ENCODE measurements at regions of chr1 and their contacts with region 1.

Region 1: DNA sequence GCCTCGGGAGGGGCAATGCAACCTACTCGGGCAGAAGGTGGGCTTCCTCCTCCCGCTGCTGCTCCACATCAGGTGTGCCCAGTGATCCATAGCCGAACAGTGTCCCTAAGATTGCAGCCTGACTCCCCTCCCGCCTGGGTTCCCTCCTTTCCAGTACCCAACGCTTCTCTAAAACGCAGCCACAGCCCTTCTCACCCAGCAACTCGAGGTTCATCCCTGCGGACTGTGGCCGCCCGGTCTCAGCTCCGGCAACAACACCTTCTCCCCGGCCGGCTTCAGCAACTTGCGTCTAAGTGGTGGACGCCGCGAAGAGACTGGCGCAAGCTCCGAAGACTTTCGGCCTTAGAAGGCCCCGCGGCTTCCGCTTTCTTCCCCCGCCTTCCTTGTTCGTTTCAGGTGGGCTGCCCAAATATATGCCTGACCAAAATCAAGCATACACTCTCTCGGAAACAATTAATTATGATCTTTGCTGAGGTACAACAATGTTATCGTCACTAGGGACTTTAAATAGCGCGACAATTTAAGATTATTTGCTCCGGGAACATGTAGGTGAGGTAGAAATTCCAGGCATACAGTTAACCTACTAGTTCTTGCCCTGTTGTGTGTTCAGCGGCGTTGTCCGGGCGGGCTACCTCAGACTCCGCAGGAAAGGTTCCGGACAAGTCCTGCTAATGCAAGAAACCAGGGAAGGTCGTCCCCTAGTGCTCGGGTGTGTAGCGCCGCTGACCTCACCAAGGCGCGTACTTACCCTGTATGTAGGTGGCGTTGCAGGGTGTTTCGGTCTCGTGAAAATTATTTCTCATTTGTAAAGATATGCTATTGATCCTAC is at the start of gene RBBP5:
- DNase-seq: peak; percentile 94
- ATAC-seq: peak; percentile 92
- H3K4me3 Mint-ChIP-seq: peak within 1 kb of the TSS; percentile 99
- H3K27ac Mint-ChIP-seq: peak within 1 kb of the TSS; percentile 100
- H3K4me1 Mint-ChIP-seq: peaks cover 57% of the 10 kb centered on the region
- H3K27me3 Mint-ChIP-seq: no peaks in the 10 kb centered on the region
- CTCF ChIP-seq: no peak
- total RNA-seq, gene RBBP5: 16.3 and 19.7 TPM in 2 replicates

Region 2: GRCh38 chr1:203795441-203796235 is 1326.2 kb before region 1 on chr1 and contains the starts of genes ZBED6 and ZC3H11A:
- CTCF ChIA-PET with region 1: no interaction called
- POLR2A ChIA-PET with region 1: interaction called, 9 read pairs
- intact Hi-C with region 1: loop called (anchors 5 kb)
- DNase-seq: peak; percentile 90
- ATAC-seq: peak; percentile 97
- H3K4me3 Mint-ChIP-seq: peak within 1 kb of the TSS; percentile 99
- H3K27ac Mint-ChIP-seq: peak within 1 kb of the TSS; percentile 95
- H3K4me1 Mint-ChIP-seq: peaks cover 51% of the 10 kb centered on the region
- H3K27me3 Mint-ChIP-seq: no peaks in the 10 kb centered on the region
- CTCF ChIP-seq: no peak
- total RNA-seq, gene ZBED6: 26.3 and 31.4 TPM in 2 replicates
- total RNA-seq, gene ZC3H11A: 85.6 and 91.6 TPM in 2 replicates

Region 3: GRCh38 chr1:204961765-204962419 is 160.0 kb before region 1 on chr1:
- CTCF ChIA-PET with region 1: no interaction called
- POLR2A ChIA-PET with region 1: no interaction called
- intact Hi-C with region 1: no loop called
- DNase-seq: no peak
- ATAC-seq: no peak
- H3K4me3 Mint-ChIP-seq: no peak overlapping the region
- H3K27ac Mint-ChIP-seq: no peak overlapping the region
- H3K4me1 Mint-ChIP-seq: peaks cover 22% of the 10 kb centered on the region
- H3K27me3 Mint-ChIP-seq: peaks cover 18% of the 10 kb centered on the region
- CTCF ChIP-seq: no peak

Region 4: DNA sequence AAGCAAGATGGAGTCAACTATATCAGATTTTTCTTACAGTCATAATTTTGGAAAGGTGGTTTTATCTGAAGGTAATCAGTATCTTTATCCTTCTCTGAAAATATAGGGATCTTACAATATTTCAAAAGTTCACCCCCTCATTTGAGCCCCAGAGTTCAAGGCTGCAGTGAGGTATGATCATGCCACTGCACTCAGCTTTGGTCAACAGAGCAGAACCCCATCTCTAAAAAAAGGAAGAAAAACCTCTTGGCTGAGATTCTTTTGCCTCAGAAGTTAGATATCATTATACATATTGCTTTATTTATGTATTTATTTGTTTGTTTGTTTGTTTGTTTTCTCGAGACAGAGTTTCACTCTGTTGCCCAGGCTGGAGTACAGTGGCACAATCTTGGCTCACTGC is 11.4 kb after region 1 on chr1:
- CTCF ChIA-PET with region 1: interaction called, 8 read pairs
- POLR2A ChIA-PET with region 1: interaction called, 10 read pairs
- intact Hi-C with region 1: no loop called
- DNase-seq: no peak
- ATAC-seq: no peak
- H3K4me3 Mint-ChIP-seq: no peak overlapping the region
- H3K27ac Mint-ChIP-seq: no peak overlapping the region
- H3K4me1 Mint-ChIP-seq: peaks cover 16% of the 10 kb centered on the region
- H3K27me3 Mint-ChIP-seq: no peaks in the 10 kb centered on the region
- CTCF ChIP-seq: no peak

Region 5: GRCh38 chr1:205211169-205211838 is 89.4 kb after region 1 on chr1 and contains the start of gene DSTYK:
- CTCF ChIA-PET with region 1: no interaction called
- POLR2A ChIA-PET with region 1: interaction called, 5 read pairs
- intact Hi-C with region 1: loop called (anchors 1 kb)
- DNase-seq: peak; percentile 81
- ATAC-seq: peak; percentile 82
- H3K4me3 Mint-ChIP-seq: peak within 1 kb of the TSS; percentile 95
- H3K27ac Mint-ChIP-seq: peak within 1 kb of the TSS; percentile 97
- H3K4me1 Mint-ChIP-seq: peaks cover 35% of the 10 kb centered on the region
- H3K27me3 Mint-ChIP-seq: no peaks in the 10 kb centered on the region
- CTCF ChIP-seq: no peak
- total RNA-seq, gene DSTYK: 7.3 and 9.6 TPM in 2 replicates

Region 6: DNA sequence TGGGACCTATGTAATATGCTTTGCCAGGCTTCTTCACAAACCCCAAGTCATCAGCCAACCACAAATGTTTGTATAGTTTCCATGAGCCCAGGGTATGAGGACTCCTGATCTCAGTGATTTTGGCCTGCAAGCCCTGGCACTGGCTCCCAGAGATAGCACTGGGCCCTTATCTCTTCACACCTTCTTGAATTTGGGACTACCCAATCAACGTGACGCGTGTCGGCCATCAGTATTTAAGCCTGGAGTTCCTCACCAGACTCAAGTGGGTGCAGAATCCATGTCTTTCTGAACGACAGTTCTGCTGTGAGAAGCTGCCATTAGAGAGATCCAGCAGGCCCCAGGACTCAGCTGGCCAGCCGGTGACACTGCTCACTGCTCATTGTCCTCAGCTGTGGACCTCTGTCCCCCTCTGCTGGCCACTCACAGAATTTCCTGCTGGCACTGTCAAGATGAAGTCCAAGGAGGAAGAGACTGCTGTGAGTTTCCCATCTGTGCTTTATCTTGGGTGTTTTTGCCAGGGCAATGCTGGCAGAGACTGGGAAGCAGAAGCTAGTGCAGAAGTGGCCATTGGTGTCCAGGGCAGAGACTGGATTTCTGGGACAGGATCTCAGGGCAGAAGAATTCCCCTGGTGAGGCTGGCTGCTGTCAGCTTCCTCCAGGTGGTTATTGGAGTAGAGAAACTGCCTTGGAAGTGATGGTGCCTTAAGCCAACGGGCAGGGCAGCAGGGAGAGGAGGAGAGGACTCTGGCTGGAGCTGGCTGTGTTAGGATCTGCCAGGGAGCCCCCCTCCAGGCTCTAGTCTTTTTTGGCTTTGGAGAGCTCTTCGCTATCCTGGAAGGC is 134.3 kb after region 1 on chr1:
- CTCF ChIA-PET with region 1: interaction called, 6 read pairs
- POLR2A ChIA-PET with region 1: no interaction called
- intact Hi-C with region 1: loop called (anchors 5 kb)
- DNase-seq: peak; percentile 74
- ATAC-seq: peak; percentile 99
- H3K4me3 Mint-ChIP-seq: no peak overlapping the region
- H3K27ac Mint-ChIP-seq: no peak overlapping the region
- H3K4me1 Mint-ChIP-seq: no peaks in the 10 kb centered on the region
- H3K27me3 Mint-ChIP-seq: peaks cover 3% of the 10 kb centered on the region
- CTCF ChIP-seq: peak; percentile 98

Region 7: GRCh38 chr1:205335643-205336091 is 213.8 kb after region 1 on chr1:
- CTCF ChIA-PET with region 1: no interaction called
- POLR2A ChIA-PET with region 1: no interaction called
- intact Hi-C with region 1: loop called (anchors 5 kb)
- DNase-seq: peak; percentile 70
- ATAC-seq: peak; percentile 84
- H3K4me3 Mint-ChIP-seq: no peak overlapping the region
- H3K27ac Mint-ChIP-seq: no peak overlapping the region
- H3K4me1 Mint-ChIP-seq: peaks cover 6% of the 10 kb centered on the region
- H3K27me3 Mint-ChIP-seq: no peaks in the 10 kb centered on the region
- CTCF ChIP-seq: peak; percentile 84